ENCODE measurements at regions of chr3 and their contacts with region 1.

Region 1: GRCh38 chr3:65412588-65412987 is 626.1 kb downstream of the MAGI1 start:
- DNase-seq: no peak

Region 2: GRCh38 chr3:64533617-64534317 is 878.8 kb before region 1 on chr3:
- intact Hi-C with region 1: loop called (anchors 10 kb)
- DNase-seq: peak; percentile 83

Region 3: GRCh38 chr3:65342084-65342683 is 70.4 kb before region 1 on chr3:
- intact Hi-C with region 1: loop called (anchors 5 kb)
- DNase-seq: no peak

Region 4: DNA sequence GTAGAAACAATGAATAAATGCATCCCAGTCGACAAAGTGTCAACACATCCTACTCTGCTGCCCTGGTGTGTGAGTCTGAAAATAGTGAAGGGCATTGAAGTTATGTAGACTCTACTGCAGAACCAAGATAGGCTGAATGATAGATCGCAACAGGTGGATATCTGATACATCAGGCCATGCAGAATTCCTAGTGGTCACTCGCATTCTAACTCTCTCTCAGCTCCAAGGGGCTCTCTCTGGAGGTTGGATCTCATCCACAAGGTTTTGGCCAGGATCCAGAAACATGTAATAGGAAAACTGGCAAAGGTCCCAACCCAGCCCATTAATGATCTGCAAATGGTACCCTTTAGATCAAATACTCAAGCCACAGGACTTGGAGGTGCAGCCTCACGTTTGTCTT is 112.0 kb after region 1 on chr3:
- intact Hi-C with region 1: no loop called
- DNase-seq: no peak

Region 5: DNA sequence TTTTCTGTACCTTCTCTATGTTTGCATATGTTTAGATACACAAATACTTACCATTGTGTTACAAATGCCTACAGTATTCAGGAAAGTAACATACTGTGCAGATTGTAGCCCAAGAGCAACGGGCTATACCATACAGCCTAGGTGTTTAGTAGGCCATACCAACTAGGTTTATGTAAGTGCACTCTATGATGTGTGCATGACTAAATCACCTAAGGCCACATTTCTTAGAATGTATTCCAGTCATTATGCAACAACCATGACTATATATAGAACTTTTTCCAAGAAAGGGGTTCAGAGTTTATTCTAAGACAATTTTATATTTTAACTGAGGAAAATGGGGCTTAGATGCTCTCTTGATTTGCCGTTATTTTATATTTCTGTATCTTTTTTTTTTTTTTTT is 214.5 kb after region 1 on chr3:
- intact Hi-C with region 1: no loop called
- DNase-seq: no peak

Region 6: GRCh38 chr3:66038726-66039589 is 626.4 kb after region 1 on chr3 and contains the start of gene MAGI1:
- intact Hi-C with region 1: no loop called
- DNase-seq: peak; percentile 92
- total RNA-seq, gene MAGI1: 69.4 TPM